ENCODE measurements at regions of chr22 and their contacts with region 1.

Region 1: DNA sequence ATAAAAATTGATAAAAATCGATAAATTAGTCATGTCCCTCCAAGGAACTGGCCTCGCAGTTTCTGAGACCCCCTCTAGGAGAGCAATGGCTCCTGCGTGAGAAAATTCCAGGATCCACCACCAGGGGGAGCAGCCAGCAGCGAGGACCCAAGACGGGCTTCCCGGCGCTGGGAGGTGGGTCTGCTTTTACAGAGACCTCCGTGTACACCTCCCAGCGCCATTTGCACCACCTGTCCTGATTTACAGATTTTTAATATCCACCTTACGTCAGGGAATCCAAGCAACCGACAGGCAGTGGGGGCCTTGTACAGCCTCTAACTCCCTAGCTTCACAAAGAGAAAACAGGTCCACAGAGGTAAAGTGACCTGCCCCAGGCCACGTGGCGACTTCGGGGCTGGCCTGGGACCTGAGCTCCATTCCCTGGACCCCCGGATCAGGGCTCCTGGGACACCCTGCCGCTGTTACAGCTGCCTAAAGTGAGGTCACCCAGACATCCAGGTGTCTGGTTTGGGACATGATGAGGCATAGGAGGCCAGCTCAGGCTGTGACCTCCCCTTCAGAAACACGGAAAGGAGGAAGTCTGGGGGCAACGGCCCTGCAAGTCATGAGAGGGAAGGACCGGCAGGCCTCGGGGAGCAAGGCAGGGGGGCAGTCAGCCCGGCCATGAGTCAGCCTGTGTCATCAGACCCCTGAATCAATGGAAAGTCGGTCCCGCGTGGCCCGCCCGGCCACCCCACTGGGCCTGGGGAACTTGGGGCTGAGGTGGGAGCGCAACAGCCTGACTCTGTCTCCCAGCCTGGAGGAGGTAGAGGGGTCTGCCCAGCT is 3.5 kb downstream of the OSM start:
- DNase-seq: peak; percentile 66 to 87 (median 76)
- ATAC-seq: peak in 1 of 2 donors; percentile 12
- H3K4me3 Mint-ChIP-seq: peak overlapping the region in 9 of 10 donors; percentile 42 to 74 (median 57)
- H3K27ac Mint-ChIP-seq: peak overlapping the region in 8 of 10 donors; percentile 43 to 92 (median 76)
- H3K4me1 Mint-ChIP-seq: peaks cover 26 to 51% (median 42%) of the 10 kb centered on the region in 4 donors
- H3K27me3 Mint-ChIP-seq: no peaks in the 10 kb centered on the region

Region 2: GRCh38 chr22:30235687-30236170 is 27.4 kb before region 1 on chr22:
- POLR2A ChIA-PET with region 1: no interaction called
- DNase-seq: no peak
- ATAC-seq: no peak
- H3K4me3 Mint-ChIP-seq: no peak overlapping the region
- H3K27ac Mint-ChIP-seq: peak overlapping the region in 2 of 10 donors; percentile 24 to 29
- H3K4me1 Mint-ChIP-seq: peaks cover 0 to 3% (median 1%) of the 10 kb centered on the region in 4 donors
- H3K27me3 Mint-ChIP-seq: no peaks in the 10 kb centered on the region

Region 3: GRCh38 chr22:30282616-30283081 is 19.5 kb after region 1 on chr22:
- POLR2A ChIA-PET with region 1: interaction called, 51 read pairs
- DNase-seq: no peak
- ATAC-seq: no peak
- H3K4me3 Mint-ChIP-seq: peak overlapping the region in 1 of 10 donors; percentile 4
- H3K27ac Mint-ChIP-seq: no peak overlapping the region
- H3K4me1 Mint-ChIP-seq: peaks cover 10 to 41% (median 39%) of the 10 kb centered on the region in 4 donors
- H3K27me3 Mint-ChIP-seq: no peaks in the 10 kb centered on the region

Region 4: DNA sequence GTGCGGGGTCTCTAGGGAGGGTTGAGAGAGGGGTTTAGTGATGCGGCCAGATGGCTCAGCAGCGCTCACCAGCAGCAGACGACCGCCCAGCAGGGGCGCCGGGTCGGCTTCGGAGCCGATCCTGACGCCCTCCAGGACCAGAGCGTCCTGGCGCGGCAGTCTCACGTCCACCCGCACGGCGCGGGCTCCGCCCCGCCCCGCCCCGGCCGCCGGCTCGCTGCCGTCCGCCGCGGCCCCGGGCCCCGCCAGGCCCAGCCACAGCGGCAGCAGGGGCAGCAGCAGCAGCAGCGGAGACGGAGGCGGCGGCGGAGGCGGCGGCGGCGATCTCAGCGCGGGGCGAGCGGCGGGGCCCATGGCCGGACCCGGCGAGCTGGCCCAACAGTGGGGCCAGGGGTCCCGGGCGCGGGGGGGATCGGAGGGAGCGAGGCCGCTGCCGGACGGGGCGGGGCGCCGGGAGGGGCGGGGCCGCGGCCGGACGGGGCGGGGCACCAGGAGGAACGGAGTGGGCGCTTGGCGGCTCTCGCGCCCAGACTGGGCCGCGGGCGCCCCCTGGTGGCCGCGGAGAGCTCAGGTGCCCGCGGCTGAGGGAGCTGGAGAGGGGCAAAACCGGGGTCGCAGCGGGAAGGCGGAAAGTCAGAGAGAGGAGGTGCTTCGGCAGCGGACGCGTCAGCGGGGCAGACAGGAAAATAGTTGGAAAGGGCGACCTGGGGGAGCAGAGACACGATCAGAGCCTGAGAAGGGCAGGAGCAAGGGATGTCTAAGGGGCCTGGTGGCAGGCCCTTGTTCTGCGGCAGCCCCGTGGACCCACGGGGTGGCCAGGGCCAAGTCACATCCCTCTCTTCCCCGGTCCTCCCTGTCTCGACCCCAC is 124.1 kb after region 1 on chr22 and contains the start of gene RNF215:
- POLR2A ChIA-PET with region 1: interaction called, 12 read pairs
- DNase-seq: peak; percentile 61 to 90 (median 81)
- ATAC-seq: peak; percentile 78
- H3K4me3 Mint-ChIP-seq: peak within 1 kb of the TSS; percentile 61 to 91 (median 80)
- H3K27ac Mint-ChIP-seq: peak within 1 kb of the TSS in 8 of 10 donors; percentile 55 to 93 (median 84)
- H3K4me1 Mint-ChIP-seq: peaks cover 14 to 27% (median 24%) of the 10 kb centered on the region in 4 donors
- H3K27me3 Mint-ChIP-seq: no peaks in the 10 kb centered on the region
- polyA plus RNA-seq, gene RNF215: 0.14 to 0.44 (median 0.39) TPM